Transverse colon (tissue), 4 donors: ENCODE measurements at regions of chr5 and their contacts with region 1.

Region 1: DNA sequence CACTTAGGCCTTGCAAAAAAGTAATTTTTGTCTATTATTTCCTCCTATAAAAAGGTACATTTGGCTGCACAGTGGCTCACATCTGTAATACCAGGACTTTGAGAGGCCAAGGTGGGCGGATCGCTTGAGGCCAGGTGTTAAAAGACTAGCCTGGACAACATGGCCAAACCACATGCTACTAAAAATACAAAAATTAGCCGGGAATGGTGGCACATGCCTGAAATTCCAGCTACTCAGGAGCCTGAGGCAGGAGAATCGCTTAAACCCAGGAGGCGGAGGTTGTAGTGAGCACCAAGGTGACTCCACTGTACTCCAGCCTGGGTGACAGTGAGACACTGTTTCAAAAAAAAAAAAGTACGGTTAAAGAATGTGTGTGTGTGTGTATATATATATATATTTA is 15.7 kb downstream of the NUP155 start:
- DNase-seq: no peak
- H3K4me3 ChIP-seq: no peak overlapping the region
- H3K27ac ChIP-seq: no peak overlapping the region
- H3K4me1 ChIP-seq: no peaks in the 10 kb centered on the region
- H3K27me3 ChIP-seq: no peaks in the 10 kb centered on the region
- CTCF ChIP-seq: no peak
- EP300 ChIP-seq: no peak
- POLR2A ChIP-seq: no peak

Region 2: DNA sequence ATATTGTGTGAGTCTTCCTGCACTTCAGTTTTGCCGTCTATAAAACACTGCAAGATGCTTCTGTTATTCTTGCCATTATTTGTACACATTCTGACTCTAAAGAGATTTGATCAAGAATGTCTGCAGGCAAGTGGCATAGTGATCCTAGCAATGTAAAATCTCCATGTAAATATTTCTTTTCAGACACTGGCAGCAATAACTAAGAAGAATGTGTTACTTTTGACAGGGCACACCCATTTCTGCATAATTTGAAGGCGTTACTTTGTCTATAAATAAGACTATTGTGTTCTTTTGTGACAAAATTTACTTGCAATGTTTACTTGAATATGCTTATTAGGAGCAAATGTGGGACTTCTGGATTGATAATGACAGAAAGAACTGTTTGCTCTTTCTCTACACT is 1073.5 kb before region 1 on chr5:
- in situ Hi-C with region 1: no loop called
- intact Hi-C with region 1: loop called (anchors 5 kb)
- DNase-seq: no peak
- H3K4me3 ChIP-seq: no peak overlapping the region
- H3K27ac ChIP-seq: no peak overlapping the region
- H3K4me1 ChIP-seq: no peaks in the 10 kb centered on the region
- H3K27me3 ChIP-seq: no peaks in the 10 kb centered on the region
- CTCF ChIP-seq: no peak
- EP300 ChIP-seq: no peak
- POLR2A ChIP-seq: no peak